Right ventricle myocardium inferior (tissue), 1 donor: ENCODE measurements at regions of chr10 and their contacts with region 1.

Region 1: DNA sequence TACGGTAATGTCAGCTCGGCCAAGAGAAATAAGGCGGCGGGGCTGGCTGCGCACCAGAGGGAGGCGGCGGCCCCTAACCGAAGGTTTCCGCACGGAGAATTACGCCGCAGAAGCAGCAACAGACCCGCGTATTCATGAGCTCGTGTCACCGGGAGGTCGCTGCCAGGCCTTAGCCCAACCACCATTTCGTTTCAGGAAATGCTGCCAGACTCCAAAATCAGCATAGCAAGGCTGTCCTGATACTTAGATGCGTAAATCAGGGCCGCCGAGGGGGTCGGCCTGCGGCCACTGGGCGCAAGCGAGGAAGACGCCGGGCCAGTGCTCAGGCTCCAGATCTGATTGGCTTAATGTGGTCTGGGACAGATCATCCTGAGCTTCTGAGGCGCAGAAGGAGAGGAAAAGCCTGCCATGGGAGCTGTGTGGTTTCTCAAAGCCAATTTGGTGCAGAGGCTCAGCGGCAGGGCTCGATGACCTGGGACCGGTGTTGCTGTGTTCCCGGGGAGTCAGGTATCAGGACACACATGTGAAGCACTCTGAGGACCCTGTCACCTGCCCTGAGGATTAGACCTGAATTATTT is 247.9 kb downstream of the BAMBI start:
- DNase-seq: peak; percentile 71
- ATAC-seq: peak; percentile 80

Region 2: DNA sequence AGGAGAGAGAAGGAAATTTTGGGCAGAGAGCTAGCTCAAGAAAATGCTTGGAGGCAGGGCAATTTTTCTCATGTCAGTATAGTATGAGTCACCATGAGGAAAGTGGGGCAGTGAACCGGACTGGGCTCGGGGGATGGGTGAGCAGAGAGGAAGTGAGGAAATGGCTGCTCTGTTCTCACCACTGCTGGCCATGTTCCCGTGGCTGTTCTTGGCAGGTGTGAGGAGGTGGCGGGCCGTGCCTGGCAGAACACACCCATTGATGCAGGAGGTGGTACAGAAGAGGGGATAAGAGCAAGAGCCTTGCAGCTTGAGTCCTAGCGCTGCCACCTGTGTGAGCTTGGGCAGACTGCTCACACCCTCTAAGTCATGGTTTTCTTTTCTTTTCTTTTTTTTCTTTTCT is 59.2 kb after region 1 on chr10:
- intact Hi-C with region 1: loop called (anchors 10 kb)
- DNase-seq: peak; percentile 91
- ATAC-seq: peak; percentile 98

Region 3: GRCh38 chr10:29229258-29229705 is 304.1 kb after region 1 on chr10:
- intact Hi-C with region 1: no loop called
- DNase-seq: no peak
- ATAC-seq: no peak